CD8-positive, alpha-beta T cell (primary cell): ENCODE measurements at regions of chr15 and their contacts with region 1.

Region 1: DNA sequence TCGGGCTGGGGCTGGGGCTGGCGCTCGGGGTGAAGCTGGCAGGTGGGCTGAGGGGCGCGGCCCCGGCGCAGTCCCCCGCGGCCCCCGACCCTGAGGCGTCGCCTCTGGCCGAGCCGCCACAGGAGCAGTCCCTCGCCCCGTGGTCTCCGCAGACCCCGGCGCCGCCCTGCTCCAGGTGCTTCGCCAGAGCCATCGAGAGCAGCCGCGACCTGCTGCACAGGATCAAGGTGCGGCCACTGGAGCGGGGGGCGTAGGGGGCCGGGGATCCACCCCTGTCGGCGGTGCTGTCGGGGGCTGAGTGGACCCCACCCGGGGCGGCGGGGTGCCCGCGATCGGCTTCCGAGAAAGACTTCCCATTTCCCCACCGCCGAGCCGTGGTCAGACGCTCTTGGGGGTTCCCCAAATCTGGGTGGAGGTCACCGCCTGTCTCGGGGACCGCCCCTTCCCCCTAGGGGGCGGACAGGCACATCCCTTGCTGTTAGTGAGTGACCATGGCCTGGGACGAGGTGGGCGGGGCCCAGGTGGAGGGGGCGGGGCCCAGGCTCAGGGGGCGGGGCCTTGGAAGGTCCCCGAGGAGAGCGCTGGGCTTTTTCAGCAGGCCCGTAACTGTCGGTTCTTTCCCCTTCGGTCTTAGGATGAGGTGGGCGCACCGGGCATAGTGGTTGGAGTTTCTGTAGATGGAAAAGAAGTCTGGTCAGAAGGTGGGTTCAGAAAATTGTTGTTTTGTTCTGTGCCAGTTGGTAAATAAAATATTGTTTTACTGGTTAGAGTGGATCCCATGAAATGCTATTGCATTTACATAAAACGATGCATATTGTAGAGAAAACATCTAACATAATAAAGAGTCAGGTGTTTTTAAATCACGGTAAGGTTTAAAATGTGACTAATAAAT is 587 bp downstream of the LACTB start:
- DNase-seq: peak; percentile 19 to 87 (median 69)
- ATAC-seq: peak; percentile 81
- H3K4me3 ChIP-seq: peak overlapping the region; percentile 83 to 87
- H3K4me3 Mint-ChIP-seq: peak overlapping the region; percentile 87
- H3K27ac ChIP-seq: peak overlapping the region; percentile 61 to 66
- H3K27ac Mint-ChIP-seq: peak overlapping the region; percentile 90
- H3K4me1 ChIP-seq: peaks cover 7% of the 10 kb centered on the region
- H3K4me1 Mint-ChIP-seq: peaks cover 17% of the 10 kb centered on the region
- H3K27me3 ChIP-seq: no peaks in the 10 kb centered on the region
- H3K27me3 Mint-ChIP-seq: no peaks in the 10 kb centered on the region
- CTCF ChIP-seq: no peak

Region 2: DNA sequence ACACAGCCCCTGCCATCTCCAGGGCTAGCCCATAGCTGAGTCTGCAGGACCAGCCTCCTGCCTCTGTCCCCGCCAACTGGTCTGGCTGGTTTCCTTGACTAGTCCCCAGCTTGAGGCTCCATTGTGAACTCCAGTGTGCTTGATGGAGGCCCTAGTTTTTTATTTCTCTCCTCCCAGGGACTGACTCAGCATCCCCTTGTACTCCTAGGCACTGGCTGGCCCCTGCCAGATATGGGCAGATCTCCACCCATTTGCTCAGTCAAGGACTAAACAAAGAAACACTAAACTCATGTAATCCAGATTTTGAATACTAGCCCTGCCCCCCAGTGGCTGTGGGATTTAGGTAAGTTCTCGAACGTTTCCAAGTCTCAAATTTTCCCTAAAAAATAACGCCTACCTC is 1477.7 kb before region 1 on chr15:
- CTCF ChIA-PET with region 1: no interaction called
- POLR2A ChIA-PET with region 1: no interaction called
- intact Hi-C with region 1: no loop called
- DNase-seq: no peak
- ATAC-seq: no peak
- H3K4me3 ChIP-seq: no peak overlapping the region
- H3K4me3 Mint-ChIP-seq: no peak overlapping the region
- H3K27ac ChIP-seq: no peak overlapping the region
- H3K27ac Mint-ChIP-seq: no peak overlapping the region
- H3K4me1 ChIP-seq: no peaks in the 10 kb centered on the region
- H3K4me1 Mint-ChIP-seq: no peaks in the 10 kb centered on the region
- H3K27me3 ChIP-seq: peaks cover 2 to 4% of the 10 kb centered on the region in 2 experiments
- H3K27me3 Mint-ChIP-seq: peaks cover 14% of the 10 kb centered on the region
- CTCF ChIP-seq: no peak

Region 3: GRCh38 chr15:63048115-63048775 is 74.0 kb before region 1 on chr15:
- CTCF ChIA-PET with region 1: interaction called, 11 read pairs
- POLR2A ChIA-PET with region 1: no interaction called
- intact Hi-C with region 1: loop called (anchors 1 kb)
- DNase-seq: peak; percentile 65 to 92 (median 85)
- ATAC-seq: peak; percentile 77
- H3K4me3 ChIP-seq: peak overlapping the region; percentile 62 to 72
- H3K4me3 Mint-ChIP-seq: peak overlapping the region; percentile 88
- H3K27ac ChIP-seq: peak overlapping the region in 1 of 2 experiments; percentile 47
- H3K27ac Mint-ChIP-seq: peak overlapping the region; percentile 74
- H3K4me1 ChIP-seq: peaks cover 21% of the 10 kb centered on the region
- H3K4me1 Mint-ChIP-seq: peaks cover 21% of the 10 kb centered on the region
- H3K27me3 ChIP-seq: peaks cover 14 to 25% of the 10 kb centered on the region in 2 experiments
- H3K27me3 Mint-ChIP-seq: peaks cover 32% of the 10 kb centered on the region
- CTCF ChIP-seq: peak; percentile 80

Region 4: GRCh38 chr15:63103416-63103815 is 18.8 kb before region 1 on chr15:
- CTCF ChIA-PET with region 1: no interaction called
- POLR2A ChIA-PET with region 1: no interaction called
- intact Hi-C with region 1: no loop called
- DNase-seq: no peak
- ATAC-seq: no peak
- H3K4me3 ChIP-seq: no peak overlapping the region
- H3K4me3 Mint-ChIP-seq: no peak overlapping the region
- H3K27ac ChIP-seq: no peak overlapping the region
- H3K27ac Mint-ChIP-seq: no peak overlapping the region
- H3K4me1 ChIP-seq: no peaks in the 10 kb centered on the region
- H3K4me1 Mint-ChIP-seq: no peaks in the 10 kb centered on the region
- H3K27me3 ChIP-seq: no peaks in the 10 kb centered on the region
- H3K27me3 Mint-ChIP-seq: peaks cover 17% of the 10 kb centered on the region
- CTCF ChIP-seq: no peak

Region 5: DNA sequence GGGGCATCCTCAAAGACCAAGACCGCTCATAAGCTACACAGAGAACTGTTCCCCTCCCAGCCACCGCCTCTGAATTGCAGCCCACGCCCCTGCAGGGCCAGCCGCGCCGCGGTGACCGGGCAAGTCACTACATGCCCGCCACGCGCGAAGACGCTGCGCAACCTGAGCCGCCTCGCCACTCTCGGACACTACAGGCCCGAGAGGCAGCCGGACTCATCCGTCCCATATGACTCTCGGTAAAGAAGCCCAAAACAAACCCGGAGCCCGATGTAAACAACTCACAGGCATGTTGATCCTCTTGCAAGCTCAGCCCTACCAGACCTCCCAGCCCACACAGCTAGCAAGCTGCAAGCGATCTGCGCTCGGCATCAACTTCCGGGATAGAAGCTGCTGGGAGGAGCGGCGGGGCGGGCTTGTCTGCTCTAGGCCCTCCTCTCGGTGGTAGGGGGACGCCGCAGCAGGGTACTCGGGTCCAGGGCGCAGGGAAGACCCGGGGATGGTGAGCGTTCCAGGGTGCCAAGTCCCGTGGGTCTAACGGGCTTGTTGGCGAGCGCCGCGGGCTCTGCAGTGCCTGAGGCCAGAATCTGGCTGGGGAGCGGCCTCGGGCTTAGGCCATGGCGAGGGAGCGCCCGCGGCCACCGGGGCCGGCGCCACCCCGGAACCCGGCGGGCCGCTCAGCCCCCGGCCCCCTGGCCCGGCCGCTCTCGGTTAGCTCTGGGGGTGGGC is 35.0 kb after region 1 on chr15 and contains the start of gene RPS27L:
- CTCF ChIA-PET with region 1: no interaction called
- POLR2A ChIA-PET with region 1: no interaction called
- intact Hi-C with region 1: loop called (anchors 1 to 2 kb)
- DNase-seq: peak; percentile 65 to 91 (median 88)
- ATAC-seq: peak; percentile 96
- H3K4me3 ChIP-seq: peak within 1 kb of the TSS; percentile 94 to 96
- H3K4me3 Mint-ChIP-seq: peak within 1 kb of the TSS; percentile 100
- H3K27ac ChIP-seq: peak within 1 kb of the TSS; percentile 75 to 78
- H3K27ac Mint-ChIP-seq: peak within 1 kb of the TSS; percentile 97
- H3K4me1 ChIP-seq: peaks cover 18% of the 10 kb centered on the region
- H3K4me1 Mint-ChIP-seq: peaks cover 26% of the 10 kb centered on the region
- H3K27me3 ChIP-seq: no peaks in the 10 kb centered on the region
- H3K27me3 Mint-ChIP-seq: no peaks in the 10 kb centered on the region
- CTCF ChIP-seq: no peak
- total RNA-seq, gene RPS27L: 40.3 to 45.9 TPM